Calu3 (cell line): ENCODE measurements at regions of chr2 and their contacts with region 1.

Region 1: GRCh38 chr2:189579592-189580186 is 897 bp downstream of the SLC40A1 start:
- DNase-seq: peak; percentile 22
- H3K4me3 Mint-ChIP-seq: peak overlapping the region; percentile 98
- H3K27ac Mint-ChIP-seq: peak overlapping the region; percentile 93
- H3K4me1 Mint-ChIP-seq: peaks cover 73% of the 10 kb centered on the region
- H3K27me3 Mint-ChIP-seq: no peaks in the 10 kb centered on the region
- CTCF ChIP-seq: no peak

Region 2: GRCh38 chr2:189613077-189613636 is 33.5 kb after region 1 on chr2:
- CTCF ChIA-PET with region 1: no interaction called
- intact Hi-C with region 1: loop called (anchors 5 kb)
- DNase-seq: peak; percentile 33
- H3K4me3 Mint-ChIP-seq: peak overlapping the region; percentile 46
- H3K27ac Mint-ChIP-seq: peak overlapping the region; percentile 76
- H3K4me1 Mint-ChIP-seq: peaks cover 37% of the 10 kb centered on the region
- H3K27me3 Mint-ChIP-seq: no peaks in the 10 kb centered on the region
- CTCF ChIP-seq: no peak

Region 3: DNA sequence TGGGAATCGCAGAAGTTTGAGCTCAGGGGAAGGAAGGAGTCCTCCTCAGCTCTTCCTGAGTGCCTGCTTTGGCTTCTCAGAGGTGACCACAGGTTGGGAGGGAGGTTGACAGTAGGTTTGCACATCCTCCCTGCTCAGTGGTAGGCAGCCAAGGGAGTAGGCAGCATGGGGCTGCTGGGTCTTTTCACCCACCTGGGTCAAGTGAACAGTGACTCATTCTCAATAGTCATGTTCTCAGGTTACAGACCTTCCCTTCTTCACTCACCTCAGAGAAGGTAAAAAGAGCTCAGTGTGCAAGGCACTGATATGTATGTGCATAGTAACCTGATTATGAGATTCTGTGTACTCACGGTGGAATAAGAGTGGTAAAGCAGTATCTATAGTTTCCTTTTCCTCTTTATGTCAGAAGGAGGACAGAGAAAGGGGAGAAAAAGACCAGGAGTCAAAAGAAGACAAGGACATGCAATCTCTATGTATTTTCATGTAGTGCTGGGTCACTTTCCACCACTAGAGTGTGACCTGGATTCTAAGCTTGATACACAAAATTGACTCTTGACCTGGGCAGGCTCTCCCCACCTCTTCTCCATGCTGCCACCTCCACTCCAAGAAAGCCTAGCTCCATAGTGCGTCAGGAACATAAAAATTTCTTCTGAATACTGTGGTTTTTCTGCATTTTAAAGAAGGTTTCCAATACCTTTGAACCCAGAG is 45.1 kb after region 1 on chr2:
- CTCF ChIA-PET with region 1: interaction called, 5 read pairs
- intact Hi-C with region 1: loop called (anchors 1 kb)
- DNase-seq: peak; percentile 29
- H3K4me3 Mint-ChIP-seq: no peak overlapping the region
- H3K27ac Mint-ChIP-seq: no peak overlapping the region
- H3K4me1 Mint-ChIP-seq: peaks cover 19% of the 10 kb centered on the region
- H3K27me3 Mint-ChIP-seq: no peaks in the 10 kb centered on the region
- CTCF ChIP-seq: no peak

Region 4: DNA sequence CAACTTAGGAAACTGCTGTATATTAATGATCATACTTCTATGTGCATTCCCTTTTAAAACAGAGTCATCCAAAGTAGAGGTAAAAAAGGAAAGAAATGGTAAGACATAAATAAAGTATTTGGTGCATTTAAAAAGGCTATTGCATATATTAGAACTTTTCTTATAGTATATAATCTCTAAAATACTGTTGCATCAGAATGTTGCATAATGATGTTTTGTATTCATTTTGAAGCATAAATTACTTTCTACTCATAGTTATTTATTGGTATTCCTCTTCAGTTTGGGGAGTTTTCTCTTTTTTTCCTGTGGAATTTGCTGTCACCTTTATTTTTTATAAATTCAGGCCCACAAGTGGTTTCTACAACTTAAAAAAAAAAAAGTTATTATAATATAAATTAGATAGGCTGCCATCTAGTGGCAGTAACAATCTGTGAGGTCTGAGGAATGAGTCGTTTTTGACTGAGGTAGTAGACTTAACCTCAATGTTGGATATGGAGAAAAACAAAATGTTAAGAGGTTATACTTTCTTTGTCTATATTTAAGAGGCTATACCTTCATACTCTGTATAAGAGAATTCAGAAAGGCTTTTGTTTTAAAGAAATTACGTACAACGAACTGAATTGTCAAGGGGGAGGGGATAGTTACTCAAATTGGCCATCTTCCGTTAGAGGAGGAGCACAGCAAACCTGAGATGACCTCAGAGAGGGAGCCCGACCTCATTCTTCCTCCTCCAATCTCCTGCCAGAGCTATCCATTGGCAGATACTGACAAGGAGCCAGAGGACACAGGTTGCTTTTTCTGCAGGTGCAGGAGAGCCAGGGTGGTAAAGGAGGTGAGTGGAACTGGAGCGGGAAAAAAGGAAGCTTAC is 118.6 kb after region 1 on chr2:
- CTCF ChIA-PET with region 1: no interaction called
- intact Hi-C with region 1: no loop called
- DNase-seq: no peak
- H3K4me3 Mint-ChIP-seq: no peak overlapping the region
- H3K27ac Mint-ChIP-seq: no peak overlapping the region
- H3K4me1 Mint-ChIP-seq: no peaks in the 10 kb centered on the region
- H3K27me3 Mint-ChIP-seq: no peaks in the 10 kb centered on the region
- CTCF ChIP-seq: peak; percentile 8